Gastrocnemius medialis (tissue), 4 donors: ENCODE measurements at regions of chr9 and their contacts with region 1.

Region 1: GRCh38 chr9:135926402-135927194 is 19.3 kb upstream of the CAMSAP1 start:
- DNase-seq: peak; percentile 95 to 97
- ATAC-seq: peak; percentile 83 to 89
- H3K4me3 ChIP-seq: no peak overlapping the region
- H3K27ac ChIP-seq: peak overlapping the region; percentile 95 to 99 (median 96)
- H3K4me1 ChIP-seq: peaks cover 20 to 45% of the 10 kb centered on the region in 2 donors
- H3K27me3 ChIP-seq: no peaks in the 10 kb centered on the region
- CTCF ChIP-seq: peak in 1 of 5 experiments; percentile 30
- POLR2A ChIP-seq: peak; percentile 35 to 72

Region 2: DNA sequence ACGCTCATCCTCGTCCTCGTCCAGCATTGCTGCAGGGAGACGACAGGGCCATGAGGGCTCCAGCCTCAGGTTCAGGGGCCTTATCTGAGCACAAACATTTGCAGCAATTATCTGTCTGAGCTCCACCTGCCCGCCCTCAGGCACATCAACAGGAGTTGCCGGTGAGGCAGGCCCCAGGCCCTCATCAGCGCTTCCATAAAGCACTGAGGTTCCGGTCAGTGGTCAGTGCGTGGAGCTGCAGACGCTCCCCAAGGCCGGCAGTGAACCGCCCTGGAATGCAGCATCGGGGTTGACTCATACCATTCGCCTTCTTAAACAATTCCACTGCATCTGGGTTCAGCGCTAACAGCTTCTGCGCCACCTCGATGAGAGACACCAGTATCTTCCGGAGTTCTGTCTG is 19.4 kb after region 1 on chr9:
- in situ Hi-C with region 1: no loop called
- intact Hi-C with region 1: loop called (anchors 2 kb)
- DNase-seq: no peak
- ATAC-seq: no peak
- H3K4me3 ChIP-seq: no peak overlapping the region
- H3K27ac ChIP-seq: peak overlapping the region; percentile 97 to 100 (median 100)
- H3K4me1 ChIP-seq: peaks cover 66 to 74% of the 10 kb centered on the region in 2 donors
- H3K27me3 ChIP-seq: no peaks in the 10 kb centered on the region
- CTCF ChIP-seq: no peak
- POLR2A ChIP-seq: no peak